ENCODE measurements at regions of chr3 and their contacts with region 1.

Region 1: DNA sequence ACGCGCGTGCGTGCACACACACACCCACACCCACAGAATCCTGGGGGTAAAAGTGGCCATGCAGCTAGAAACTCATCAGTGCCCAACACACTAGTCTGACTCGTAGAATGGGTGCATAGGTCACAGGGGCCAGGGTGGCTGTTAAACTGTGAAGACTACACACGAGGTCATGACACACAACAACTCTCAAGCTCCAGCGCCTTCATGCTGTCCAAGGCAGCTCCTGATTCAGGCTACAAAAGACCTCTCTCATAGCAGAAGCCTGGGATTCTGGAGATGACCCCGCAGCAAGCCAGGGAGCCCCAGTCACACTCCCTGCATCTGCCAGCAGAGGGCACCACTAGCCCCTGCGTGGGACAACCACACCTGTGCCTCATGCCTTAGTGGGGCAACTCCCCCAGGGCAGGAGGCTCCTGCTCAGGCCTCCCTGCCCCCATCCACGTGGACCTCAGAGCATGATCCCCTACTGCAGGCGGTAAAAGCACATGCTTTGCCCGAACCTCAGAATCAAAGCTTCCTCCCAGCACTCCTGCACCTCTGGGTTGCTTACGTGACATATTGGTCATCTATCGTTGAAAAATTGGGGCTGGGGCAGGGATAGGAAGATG is 93.1 kb downstream of the LRIG1 start:
- DNase-seq: peak; percentile 63
- H3K4me3 Mint-ChIP-seq: no peak overlapping the region
- H3K27ac Mint-ChIP-seq: no peak overlapping the region
- H3K4me1 Mint-ChIP-seq: peaks cover 16% of the 10 kb centered on the region
- H3K27me3 Mint-ChIP-seq: no peaks in the 10 kb centered on the region

Region 2: GRCh38 chr3:65988411-65989180 is 419.1 kb before region 1 on chr3:
- intact Hi-C with region 1: loop called (anchors 5 kb)
- DNase-seq: no peak
- H3K4me3 Mint-ChIP-seq: no peak overlapping the region
- H3K27ac Mint-ChIP-seq: no peak overlapping the region
- H3K4me1 Mint-ChIP-seq: no peaks in the 10 kb centered on the region
- H3K27me3 Mint-ChIP-seq: peaks cover 2% of the 10 kb centered on the region

Region 3: DNA sequence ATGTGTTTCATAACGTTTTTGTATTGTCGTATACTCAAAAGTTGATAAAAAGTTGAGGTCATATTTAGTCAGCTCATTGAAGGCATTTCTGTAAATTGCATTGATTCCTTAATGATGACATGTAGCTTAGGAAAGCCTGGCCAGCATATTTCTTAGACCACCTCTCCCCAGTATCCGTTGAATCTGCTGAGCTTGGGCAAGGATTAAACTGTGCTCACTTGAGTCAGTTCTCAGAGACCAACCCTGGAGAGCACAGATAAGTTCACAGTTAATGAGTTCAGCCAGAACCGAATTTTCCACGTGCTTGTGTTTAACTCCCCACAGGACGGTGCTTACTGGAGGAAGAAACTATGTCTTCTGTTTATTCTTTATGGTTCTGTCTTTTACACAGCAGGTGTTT is 54.2 kb before region 1 on chr3:
- intact Hi-C with region 1: no loop called
- DNase-seq: no peak
- H3K4me3 Mint-ChIP-seq: no peak overlapping the region
- H3K27ac Mint-ChIP-seq: no peak overlapping the region
- H3K4me1 Mint-ChIP-seq: peaks cover 11% of the 10 kb centered on the region
- H3K27me3 Mint-ChIP-seq: no peaks in the 10 kb centered on the region

Region 4: GRCh38 chr3:66418475-66418931 is 10.8 kb after region 1 on chr3:
- intact Hi-C with region 1: no loop called
- DNase-seq: no peak
- H3K4me3 Mint-ChIP-seq: no peak overlapping the region
- H3K27ac Mint-ChIP-seq: no peak overlapping the region
- H3K4me1 Mint-ChIP-seq: peaks cover 36% of the 10 kb centered on the region
- H3K27me3 Mint-ChIP-seq: no peaks in the 10 kb centered on the region

Measured in activated T-helper 1 cell treated with anti-CD3 and anti-CD28 coated beads, Interleukin-12 subunit alpha, Interleukin-12 subunit beta, Interleukin-2, Interleukin-4 antibody, amounts not matched to agents 30 ng/mL and 10 ng/mL and 1 ng/mL, durations not matched to agents 14 hours and 24 hours and 36 hours (primary cell).